ENCODE measurements at regions of chr12 and their contacts with region 1.

Region 1: DNA sequence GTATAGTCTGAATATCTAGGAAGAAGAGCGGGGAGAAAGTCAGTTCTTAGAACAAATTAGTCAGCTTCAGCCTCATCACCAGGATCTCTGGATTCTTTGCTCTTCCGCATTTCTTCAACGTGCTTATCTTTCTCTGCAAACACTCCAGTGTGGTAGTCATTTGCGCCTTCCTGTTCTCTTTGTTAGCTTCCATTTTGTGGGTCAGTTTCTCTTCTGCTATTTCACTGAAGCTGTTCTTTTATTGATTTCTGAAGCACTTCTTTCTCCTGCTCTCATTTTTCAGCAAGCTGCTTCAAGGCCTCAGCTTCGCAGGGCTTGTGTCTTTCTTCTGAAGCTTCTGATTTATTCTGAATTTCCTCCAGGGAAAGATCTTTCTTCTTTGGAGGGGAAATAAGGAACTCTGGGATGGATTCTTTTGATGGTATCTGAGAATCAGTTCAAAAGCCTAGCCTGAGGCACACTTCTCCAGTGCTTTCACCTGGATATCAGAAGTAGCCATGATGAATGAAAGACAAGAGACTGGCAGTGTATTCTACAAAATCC is 13.5 kb downstream of the AMN1 start:
- DNase-seq: no peak
- ATAC-seq: peak; percentile 93
- H3K4me3 Mint-ChIP-seq: peak overlapping the region; percentile 32
- H3K27ac Mint-ChIP-seq: peak overlapping the region; percentile 85
- H3K4me1 Mint-ChIP-seq: peaks cover 58% of the 10 kb centered on the region
- H3K27me3 Mint-ChIP-seq: no peaks in the 10 kb centered on the region
- CTCF ChIP-seq: no peak

Region 2: GRCh38 chr12:31456562-31456961 is 258.8 kb before region 1 on chr12:
- CTCF ChIA-PET with region 1: no interaction called
- POLR2A ChIA-PET with region 1: no interaction called
- intact Hi-C with region 1: no loop called
- DNase-seq: no peak
- ATAC-seq: no peak
- H3K4me3 Mint-ChIP-seq: no peak overlapping the region
- H3K27ac Mint-ChIP-seq: no peak overlapping the region
- H3K4me1 Mint-ChIP-seq: peaks cover 12% of the 10 kb centered on the region
- H3K27me3 Mint-ChIP-seq: no peaks in the 10 kb centered on the region
- CTCF ChIP-seq: no peak

Region 3: DNA sequence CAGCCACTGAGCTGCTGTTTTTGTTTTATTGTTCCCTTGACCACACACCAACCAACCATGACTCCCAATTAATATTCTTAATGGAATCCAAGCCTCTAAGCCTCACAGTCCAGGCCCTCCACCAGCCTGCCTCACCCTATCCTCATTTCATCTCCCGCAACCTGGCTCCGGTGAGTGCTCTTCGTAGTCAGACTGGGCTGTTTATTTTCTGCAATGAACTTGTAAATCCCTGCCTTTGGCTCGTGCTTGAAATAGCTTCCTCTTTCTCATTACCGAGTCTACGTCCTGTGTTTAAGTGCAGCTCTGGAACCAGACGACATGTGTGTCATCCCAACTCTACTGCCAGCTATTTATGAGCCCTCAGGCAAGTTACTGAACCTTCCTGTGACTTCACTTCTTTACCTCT is 68.3 kb before region 1 on chr12:
- CTCF ChIA-PET with region 1: no interaction called
- POLR2A ChIA-PET with region 1: no interaction called
- intact Hi-C with region 1: no loop called
- DNase-seq: no peak
- ATAC-seq: peak; percentile 47
- H3K4me3 Mint-ChIP-seq: no peak overlapping the region
- H3K27ac Mint-ChIP-seq: peak overlapping the region; percentile 42
- H3K4me1 Mint-ChIP-seq: peaks cover 30% of the 10 kb centered on the region
- H3K27me3 Mint-ChIP-seq: no peaks in the 10 kb centered on the region
- CTCF ChIP-seq: no peak

Region 4: DNA sequence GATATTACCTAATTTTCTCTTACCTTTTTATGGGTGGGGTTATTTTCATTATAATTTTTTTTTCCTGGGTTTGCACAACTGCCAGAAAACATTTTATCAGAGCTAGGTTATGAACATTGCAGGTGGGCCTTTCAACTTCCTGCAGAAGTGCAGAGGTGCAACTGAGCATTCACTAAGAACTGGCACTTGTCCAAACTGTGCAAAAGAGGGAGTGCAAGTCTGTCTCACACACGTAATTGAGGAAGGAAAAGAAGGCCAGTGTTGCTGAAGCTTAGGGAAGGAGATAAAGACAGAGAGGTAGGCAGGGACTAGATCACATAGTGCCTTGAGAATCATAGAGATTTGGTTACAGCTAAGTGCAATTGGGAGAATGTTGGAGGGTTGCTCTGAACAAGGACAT is 27.5 kb after region 1 on chr12:
- CTCF ChIA-PET with region 1: interaction called, 3 read pairs
- POLR2A ChIA-PET with region 1: interaction called, 31 read pairs
- intact Hi-C with region 1: no loop called
- DNase-seq: no peak
- ATAC-seq: peak; percentile 40
- H3K4me3 Mint-ChIP-seq: peak overlapping the region; percentile 17
- H3K27ac Mint-ChIP-seq: peak overlapping the region; percentile 85
- H3K4me1 Mint-ChIP-seq: peaks cover 87% of the 10 kb centered on the region
- H3K27me3 Mint-ChIP-seq: no peaks in the 10 kb centered on the region
- CTCF ChIP-seq: no peak

Region 5: DNA sequence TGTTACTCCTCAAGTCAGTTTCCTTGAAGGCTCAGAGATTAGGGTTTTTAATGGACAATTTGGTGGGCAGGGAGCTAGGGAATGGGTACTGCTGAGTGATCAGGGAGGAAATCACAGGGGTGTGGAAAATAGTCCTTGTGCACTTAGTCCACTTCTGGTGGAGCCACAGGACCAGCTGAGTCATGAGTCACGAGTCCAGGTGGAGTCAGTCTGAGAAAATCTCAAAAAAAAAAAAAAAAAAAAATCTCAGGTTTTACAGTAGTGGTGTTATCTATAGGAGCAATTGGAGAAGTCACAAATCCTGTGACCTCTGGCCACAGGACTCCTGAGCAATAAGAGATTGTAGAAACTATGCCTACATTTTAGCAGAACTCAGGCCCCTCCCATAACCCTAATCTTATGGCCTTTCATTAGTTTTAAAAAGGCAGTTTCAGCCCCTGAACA is 41.6 kb after region 1 on chr12:
- CTCF ChIA-PET with region 1: no interaction called
- POLR2A ChIA-PET with region 1: no interaction called
- intact Hi-C with region 1: no loop called
- DNase-seq: no peak
- ATAC-seq: no peak
- H3K4me3 Mint-ChIP-seq: no peak overlapping the region
- H3K27ac Mint-ChIP-seq: peak overlapping the region; percentile 53
- H3K4me1 Mint-ChIP-seq: peaks cover 33% of the 10 kb centered on the region
- H3K27me3 Mint-ChIP-seq: no peaks in the 10 kb centered on the region
- CTCF ChIP-seq: no peak

Region 6: GRCh38 chr12:31804185-31804504 is 88.8 kb after region 1 on chr12:
- CTCF ChIA-PET with region 1: interaction called, 4 read pairs
- POLR2A ChIA-PET with region 1: interaction called, 37 read pairs
- intact Hi-C with region 1: loop called (anchors 1 kb)
- DNase-seq: no peak
- ATAC-seq: no peak
- H3K4me3 Mint-ChIP-seq: peak overlapping the region; percentile 78
- H3K27ac Mint-ChIP-seq: peak overlapping the region; percentile 88
- H3K4me1 Mint-ChIP-seq: peaks cover 50% of the 10 kb centered on the region
- H3K27me3 Mint-ChIP-seq: no peaks in the 10 kb centered on the region
- CTCF ChIP-seq: no peak

Measured in activated B cell treated with CpG ODN at 0.5 μM for 24 hours (primary cell).